H1 (cell line): ENCODE measurements at regions of chr7 and their contacts with region 1.

Region 1: DNA sequence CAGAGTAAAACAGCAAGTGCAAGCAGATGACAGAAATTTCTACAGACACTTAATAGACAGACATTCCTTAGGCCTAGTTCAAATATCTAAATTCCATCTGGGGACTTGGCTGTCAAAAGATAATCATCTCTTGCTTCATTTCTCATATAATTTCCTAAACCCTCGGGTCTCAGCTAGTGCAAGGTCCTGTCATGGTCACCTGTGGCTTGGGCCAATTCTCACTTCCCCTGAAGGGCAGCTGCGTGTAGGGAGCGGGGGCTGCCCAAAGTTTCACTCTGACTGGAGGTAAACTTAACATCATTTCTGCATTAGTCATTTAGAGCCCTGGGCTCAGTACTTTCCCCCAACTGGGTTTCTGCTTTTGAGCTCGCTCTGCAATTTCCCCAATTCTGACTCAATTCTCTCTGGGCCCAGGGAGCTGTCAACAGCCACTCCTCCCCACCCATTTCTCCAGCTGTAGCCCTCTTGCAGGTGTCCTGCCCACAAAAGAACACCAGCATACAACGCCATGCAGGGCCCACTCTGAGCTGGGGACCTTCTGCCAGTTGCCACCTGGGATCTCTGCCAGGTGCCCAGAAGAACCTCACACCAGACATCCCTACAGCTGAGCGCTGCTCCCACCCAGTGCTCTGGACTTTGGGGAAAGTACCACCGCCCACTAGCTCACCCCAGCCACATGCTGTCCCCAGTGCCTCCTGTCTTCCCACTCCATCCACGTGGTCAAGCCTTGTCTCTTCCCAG is 38.0 kb downstream of the VOPP1 start:
- DNase-seq: no peak
- H3K4me3 ChIP-seq: no peak overlapping the region
- H3K27ac ChIP-seq: no peak overlapping the region
- H3K4me1 ChIP-seq: peaks cover 7 to 24% (median 18%) of the 10 kb centered on the region in 4 experiments
- H3K27me3 ChIP-seq: no peaks in the 10 kb centered on the region
- CTCF ChIP-seq: no peak
- EP300 ChIP-seq: no peak
- POLR2A ChIP-seq: no peak
- RAD21 ChIP-seq: no peak

Region 2: DNA sequence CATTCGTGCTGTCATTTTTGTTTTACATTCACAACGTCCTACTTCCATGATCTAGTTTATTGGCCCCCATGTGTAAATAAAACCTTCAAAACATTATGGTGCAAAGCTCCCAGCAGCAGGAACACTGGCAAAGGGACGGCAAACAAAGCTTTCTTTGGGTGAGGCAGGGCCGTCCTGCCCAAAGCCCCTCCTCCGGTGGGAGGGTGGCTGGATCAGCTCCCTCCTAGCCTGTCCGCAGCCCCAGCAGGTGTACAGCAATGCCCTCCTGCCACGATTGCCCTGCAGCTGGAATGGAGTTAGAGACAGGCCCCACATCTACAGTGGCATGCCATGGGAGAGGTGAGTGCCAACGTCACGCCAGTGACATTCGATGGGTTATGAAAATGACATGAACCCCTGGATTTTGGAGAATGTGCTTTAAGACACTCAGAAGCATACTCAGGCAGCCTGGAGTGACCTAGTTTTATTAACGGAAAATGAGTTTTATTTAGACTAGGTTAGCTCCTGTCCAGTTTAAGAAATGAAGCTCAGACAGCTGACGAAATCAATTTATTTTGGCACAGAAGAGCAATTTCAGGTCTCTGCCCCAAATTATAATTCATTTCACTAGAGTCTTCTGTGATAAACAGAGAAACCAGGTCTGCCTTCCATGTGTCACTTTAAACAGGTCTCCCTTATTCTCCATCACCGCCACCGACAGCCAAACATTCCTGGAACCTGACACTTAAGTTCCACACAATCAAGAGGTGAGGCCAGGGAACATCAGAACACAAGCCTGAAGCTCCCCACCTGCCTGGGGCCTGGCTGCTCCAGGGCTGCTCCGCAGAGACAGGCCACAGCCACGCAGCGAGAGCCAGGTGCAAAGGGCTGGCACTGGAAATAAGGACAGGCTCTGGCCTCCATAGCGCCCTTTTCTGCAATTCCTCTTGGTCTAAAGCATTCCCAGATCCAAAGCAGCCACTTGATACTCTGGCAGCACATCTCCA is 12.1 kb before region 1 on chr7:
- CTCF ChIA-PET with region 1: interaction called, 10 read pairs
- POLR2A ChIA-PET with region 1: interaction called, 3 read pairs
- DNase-seq: no peak
- H3K4me3 ChIP-seq: no peak overlapping the region
- H3K27ac ChIP-seq: no peak overlapping the region
- H3K4me1 ChIP-seq: peaks cover under 1 to 21% (median 8%) of the 10 kb centered on the region in 4 experiments
- H3K27me3 ChIP-seq: no peaks in the 10 kb centered on the region
- CTCF ChIP-seq: no peak
- EP300 ChIP-seq: no peak
- POLR2A ChIP-seq: no peak
- RAD21 ChIP-seq: no peak